ENCODE measurements at regions of chr10 and their contacts with region 1.

Region 1: DNA sequence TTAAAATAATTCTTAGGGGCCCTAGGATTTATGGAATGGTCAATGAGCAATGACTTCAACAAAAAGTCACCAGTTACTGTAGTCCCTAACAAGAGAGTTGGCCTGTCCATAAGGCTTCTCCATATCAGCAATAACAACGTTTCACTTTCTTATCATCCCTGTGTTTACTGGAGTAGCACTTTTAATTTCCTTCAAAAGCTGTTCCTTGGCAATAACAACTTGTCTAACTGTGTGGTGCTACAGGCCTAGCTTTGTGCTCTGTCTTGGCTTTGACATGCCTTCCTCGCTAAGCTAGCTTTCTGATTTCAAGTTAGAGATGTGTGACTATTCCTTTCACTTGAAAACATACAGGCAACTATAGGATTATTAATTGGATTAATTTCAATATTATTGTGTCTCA is 81.1 kb downstream of the JMJD1C start:
- DNase-seq: no peak
- ATAC-seq: no peak
- H3K4me3 ChIP-seq: no peak overlapping the region
- H3K4me3 Mint-ChIP-seq: no peak overlapping the region
- H3K27ac ChIP-seq: no peak overlapping the region
- H3K27ac Mint-ChIP-seq: no peak overlapping the region
- H3K4me1 ChIP-seq: peaks cover 10 to 18% of the 10 kb centered on the region in 2 experiments
- H3K4me1 Mint-ChIP-seq: peaks cover 57 to 73% (median 60%) of the 10 kb centered on the region in 3 donors
- H3K27me3 ChIP-seq: no peaks in the 10 kb centered on the region
- H3K27me3 Mint-ChIP-seq: no peaks in the 10 kb centered on the region

Region 2: DNA sequence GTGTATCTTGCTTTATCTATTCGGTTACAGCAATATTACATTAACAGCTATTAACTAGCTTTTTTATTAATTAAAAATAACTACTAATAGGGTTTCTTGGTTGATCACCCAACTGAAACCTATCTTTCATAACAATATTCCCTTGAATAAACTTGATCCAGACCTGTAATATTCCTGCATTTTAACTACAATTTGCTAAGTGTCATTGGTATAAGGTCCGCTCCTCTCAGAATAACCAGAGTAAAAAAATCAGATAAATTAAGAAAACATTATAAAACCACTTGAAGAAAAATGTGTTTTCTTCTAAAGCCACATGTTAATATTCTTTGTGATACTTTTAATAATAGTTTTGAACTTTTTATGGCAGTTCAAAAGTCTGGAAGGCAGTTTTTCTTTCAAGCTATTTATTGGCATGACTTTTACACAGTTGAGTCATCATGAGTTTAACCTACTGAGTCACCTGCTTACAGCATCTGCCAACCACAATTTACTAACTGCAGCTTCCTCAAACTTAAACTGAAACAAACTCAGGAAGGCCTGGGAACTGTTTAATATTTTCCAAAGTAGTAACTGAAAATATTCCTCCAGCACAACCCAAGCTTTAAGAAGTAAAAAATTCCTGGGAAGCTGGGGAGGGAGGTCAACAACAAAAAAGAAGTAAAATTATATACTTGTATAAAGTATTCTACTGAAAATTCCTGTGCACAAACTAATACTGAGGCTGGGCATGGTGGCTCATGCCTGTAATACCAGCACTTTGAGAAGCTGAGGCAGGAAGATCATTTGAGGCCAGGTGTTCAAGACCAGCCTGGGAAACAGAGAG is 148.4 kb before region 1 on chr10:
- CTCF ChIA-PET with region 1: no interaction called
- POLR2A ChIA-PET with region 1: interaction called in 1 of 2 experiments, 13 read pairs
- DNase-seq: peak in 1 of 35 experiments; percentile 46
- ATAC-seq: peak; percentile 53 to 94 (median 86)
- H3K4me3 ChIP-seq: no peak overlapping the region
- H3K4me3 Mint-ChIP-seq: no peak overlapping the region
- H3K27ac ChIP-seq: no peak overlapping the region
- H3K27ac Mint-ChIP-seq: peak overlapping the region; percentile 61 to 74
- H3K4me1 ChIP-seq: peaks cover 24 to 29% of the 10 kb centered on the region in 2 experiments
- H3K4me1 Mint-ChIP-seq: peaks cover 55 to 69% (median 69%) of the 10 kb centered on the region in 3 donors
- H3K27me3 ChIP-seq: no peaks in the 10 kb centered on the region
- H3K27me3 Mint-ChIP-seq: no peaks in the 10 kb centered on the region

Region 3: GRCh38 chr10:63308628-63309027 is 76.0 kb before region 1 on chr10:
- CTCF ChIA-PET with region 1: no interaction called
- POLR2A ChIA-PET with region 1: interaction called in 1 of 2 experiments, 10 read pairs
- DNase-seq: no peak
- ATAC-seq: no peak
- H3K4me3 ChIP-seq: no peak overlapping the region
- H3K4me3 Mint-ChIP-seq: no peak overlapping the region
- H3K27ac ChIP-seq: no peak overlapping the region
- H3K27ac Mint-ChIP-seq: no peak overlapping the region
- H3K4me1 ChIP-seq: no peaks in the 10 kb centered on the region
- H3K4me1 Mint-ChIP-seq: peaks cover 6 to 12% (median 9%) of the 10 kb centered on the region in 3 donors
- H3K27me3 ChIP-seq: no peaks in the 10 kb centered on the region
- H3K27me3 Mint-ChIP-seq: no peaks in the 10 kb centered on the region